T-cell (primary cell): ENCODE measurements at regions of chr7 and their contacts with region 1.

Region 1: DNA sequence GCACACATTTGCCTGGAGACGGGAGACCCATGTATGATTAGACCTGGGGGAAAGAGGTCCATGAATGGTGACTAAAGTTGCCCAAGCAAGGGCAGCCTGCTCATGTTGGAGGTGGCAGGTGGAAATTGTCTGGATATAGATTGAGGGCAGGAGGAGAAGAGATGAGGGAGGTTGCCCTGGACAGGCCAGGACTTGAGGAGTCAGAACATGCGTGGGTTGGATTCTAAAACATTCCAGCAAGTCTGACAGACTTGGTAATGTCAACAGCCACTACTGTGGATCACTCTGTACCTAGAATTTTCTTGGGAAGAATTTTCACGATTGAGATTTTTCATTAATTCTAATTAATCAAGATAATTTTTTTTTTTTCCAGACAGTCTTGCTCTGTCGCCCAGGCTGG is 19.1 kb upstream of the SVOPL start:
- DNase-seq: no peak
- ATAC-seq: no peak
- H3K4me3 ChIP-seq: no peak overlapping the region
- H3K4me3 Mint-ChIP-seq: no peak overlapping the region
- H3K27ac ChIP-seq: no peak overlapping the region
- H3K27ac Mint-ChIP-seq: no peak overlapping the region
- H3K4me1 ChIP-seq: peaks cover 0 to 11% of the 10 kb centered on the region in 2 experiments
- H3K4me1 Mint-ChIP-seq: peaks cover 15 to 22% (median 20%) of the 10 kb centered on the region in 3 donors
- H3K27me3 ChIP-seq: peaks cover 0 to 10% of the 10 kb centered on the region in 2 experiments
- H3K27me3 Mint-ChIP-seq: peaks cover 0 to 13% of the 10 kb centered on the region in 2 donors

Region 2: DNA sequence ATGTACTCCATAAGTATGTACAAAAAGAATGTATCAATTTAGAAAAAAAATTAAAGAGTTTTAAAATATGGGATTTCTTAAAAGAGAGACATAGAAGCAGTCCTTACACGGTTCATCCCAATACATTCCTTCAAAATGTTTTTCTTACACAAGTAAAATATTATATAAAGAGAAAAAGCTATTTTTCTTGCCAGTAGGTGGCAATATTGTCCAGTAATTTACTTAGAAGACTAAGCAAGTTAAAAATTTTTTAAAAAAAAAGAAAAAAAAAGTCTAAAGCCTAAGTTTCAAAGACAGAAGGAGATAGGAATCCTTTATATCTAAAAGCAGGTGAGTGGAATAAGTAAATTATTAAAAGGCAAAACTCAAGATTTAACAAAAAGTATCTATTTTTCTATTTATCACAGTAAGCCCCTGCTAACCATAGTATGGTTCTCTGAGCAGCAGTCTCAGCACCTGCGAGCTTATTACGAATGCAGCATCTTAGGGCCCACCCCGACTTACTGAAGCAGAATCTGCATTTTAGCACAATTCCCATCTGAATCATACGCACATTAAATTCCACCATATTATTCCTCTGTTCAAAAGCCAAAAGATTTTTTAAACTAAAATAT is 1114.1 kb before region 1 on chr7:
- CTCF ChIA-PET with region 1: no interaction called
- POLR2A ChIA-PET with region 1: no interaction called
- DNase-seq: peak in 1 of 35 experiments; percentile 25
- ATAC-seq: no peak
- H3K4me3 ChIP-seq: no peak overlapping the region
- H3K4me3 Mint-ChIP-seq: no peak overlapping the region
- H3K27ac ChIP-seq: no peak overlapping the region
- H3K27ac Mint-ChIP-seq: no peak overlapping the region
- H3K4me1 ChIP-seq: no peaks in the 10 kb centered on the region
- H3K4me1 Mint-ChIP-seq: no peaks in the 10 kb centered on the region
- H3K27me3 ChIP-seq: peaks cover 0 to 2% of the 10 kb centered on the region in 2 experiments
- H3K27me3 Mint-ChIP-seq: peaks cover 5 to 11% of the 10 kb centered on the region in 2 donors

Region 3: DNA sequence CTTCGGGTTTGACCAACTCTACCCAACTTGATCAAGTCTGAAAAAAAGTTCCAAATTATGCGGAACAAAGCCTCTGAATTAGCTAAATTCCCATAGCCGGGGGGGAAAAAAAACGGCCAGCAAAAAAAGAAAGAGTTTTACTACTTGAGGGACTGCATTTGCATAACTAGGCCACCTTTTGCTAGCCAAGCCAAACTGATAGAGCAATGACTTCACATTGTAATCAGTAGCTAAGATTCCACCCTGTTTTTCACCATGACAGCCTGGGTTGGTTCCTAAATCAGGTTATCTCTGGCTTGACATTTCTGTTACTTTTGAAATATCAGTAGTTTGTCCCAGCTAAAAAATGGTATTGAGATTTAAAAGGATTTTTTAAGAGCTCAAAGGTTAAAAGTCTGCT is 687.0 kb before region 1 on chr7:
- CTCF ChIA-PET with region 1: no interaction called
- POLR2A ChIA-PET with region 1: interaction called in 1 of 2 experiments, 10 read pairs
- DNase-seq: no peak
- ATAC-seq: no peak
- H3K4me3 ChIP-seq: no peak overlapping the region
- H3K4me3 Mint-ChIP-seq: no peak overlapping the region
- H3K27ac ChIP-seq: no peak overlapping the region
- H3K27ac Mint-ChIP-seq: no peak overlapping the region
- H3K4me1 ChIP-seq: no peaks in the 10 kb centered on the region
- H3K4me1 Mint-ChIP-seq: no peaks in the 10 kb centered on the region
- H3K27me3 ChIP-seq: peaks cover 0 to 2% of the 10 kb centered on the region in 2 experiments
- H3K27me3 Mint-ChIP-seq: peaks cover 9 to 12% of the 10 kb centered on the region in 2 donors

Region 4: GRCh38 chr7:138865843-138866242 is 145.6 kb after region 1 on chr7:
- CTCF ChIA-PET with region 1: no interaction called
- POLR2A ChIA-PET with region 1: interaction called in 1 of 2 experiments, 10 read pairs
- DNase-seq: peak in 30 of 35 experiments; percentile 6 to 62 (median 30)
- ATAC-seq: peak; percentile 54 to 87 (median 72)
- H3K4me3 ChIP-seq: no peak overlapping the region
- H3K4me3 Mint-ChIP-seq: no peak overlapping the region
- H3K27ac ChIP-seq: no peak overlapping the region
- H3K27ac Mint-ChIP-seq: peak overlapping the region in 1 of 2 donors; percentile 74
- H3K4me1 ChIP-seq: no peaks in the 10 kb centered on the region
- H3K4me1 Mint-ChIP-seq: peaks cover 11 to 23% (median 20%) of the 10 kb centered on the region in 3 donors
- H3K27me3 ChIP-seq: peaks cover 0 to 15% of the 10 kb centered on the region in 2 experiments
- H3K27me3 Mint-ChIP-seq: peaks cover 0 to 6% of the 10 kb centered on the region in 2 donors